Activated CD4-positive, alpha-beta memory T cell treated with anti-CD3 and anti-CD28 coated beads, Interleukin-2, amount 10 ng/mL, durations not matched to agents 7 days and 5 days (primary cell): ENCODE measurements at regions of chr3 and their contacts with region 1.

Region 1: DNA sequence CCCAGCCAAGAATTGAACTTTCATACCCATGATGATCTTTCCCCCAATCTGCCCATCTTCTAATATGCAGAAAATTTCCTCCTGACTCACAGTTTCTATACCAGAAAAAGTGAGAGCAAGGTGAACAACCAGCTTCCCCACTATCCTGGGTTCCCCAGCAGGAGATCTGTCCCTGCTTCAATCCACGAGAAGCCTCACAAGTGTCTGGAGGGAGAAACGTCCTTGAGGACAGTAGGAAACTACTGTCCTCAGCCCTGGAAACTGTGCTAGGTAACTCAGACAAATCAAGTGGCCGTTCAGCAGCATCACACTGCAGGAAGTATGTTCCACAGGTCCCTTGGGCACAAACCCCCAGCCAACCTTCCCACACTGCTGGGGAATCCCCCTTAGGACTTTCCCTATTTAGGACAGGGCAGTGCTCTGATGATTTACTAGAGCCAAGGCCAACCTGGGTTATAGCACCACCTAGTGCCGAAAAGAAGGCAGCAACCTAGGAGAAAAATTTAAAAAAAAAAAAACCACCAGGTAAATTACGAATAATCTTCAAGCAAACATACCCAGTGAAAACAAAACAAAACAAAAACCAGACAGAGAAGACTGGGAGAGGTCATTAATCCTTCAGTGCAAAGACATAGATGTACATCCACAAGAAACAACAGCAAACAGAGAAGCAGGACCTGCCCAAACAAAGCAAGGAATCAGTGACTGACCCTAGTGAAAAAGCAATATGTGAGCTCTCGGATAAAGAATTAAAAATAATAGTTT is 36.0 kb downstream of the MORC1 start:
- DNase-seq: peak; percentile 37
- H3K4me3 Mint-ChIP-seq: no peak overlapping the region
- H3K27ac Mint-ChIP-seq: no peak overlapping the region
- H3K4me1 Mint-ChIP-seq: no peaks in the 10 kb centered on the region
- H3K27me3 Mint-ChIP-seq: peaks cover 36% of the 10 kb centered on the region

Region 2: GRCh38 chr3:108914774-108915641 is 166.9 kb before region 1 on chr3:
- CTCF ChIA-PET with region 1: no interaction called
- POLR2A ChIA-PET with region 1: no interaction called
- DNase-seq: peak; percentile 72
- H3K4me3 Mint-ChIP-seq: peak overlapping the region; percentile 19
- H3K27ac Mint-ChIP-seq: peak overlapping the region; percentile 40
- H3K4me1 Mint-ChIP-seq: peaks cover 14% of the 10 kb centered on the region
- H3K27me3 Mint-ChIP-seq: peaks cover 17% of the 10 kb centered on the region

Region 3: GRCh38 chr3:109023656-109024254 is 58.2 kb before region 1 on chr3:
- CTCF ChIA-PET with region 1: interaction called, 94 read pairs
- POLR2A ChIA-PET with region 1: no interaction called
- DNase-seq: peak; percentile 40
- H3K4me3 Mint-ChIP-seq: no peak overlapping the region
- H3K27ac Mint-ChIP-seq: no peak overlapping the region
- H3K4me1 Mint-ChIP-seq: no peaks in the 10 kb centered on the region
- H3K27me3 Mint-ChIP-seq: peaks cover 5% of the 10 kb centered on the region

Region 4: DNA sequence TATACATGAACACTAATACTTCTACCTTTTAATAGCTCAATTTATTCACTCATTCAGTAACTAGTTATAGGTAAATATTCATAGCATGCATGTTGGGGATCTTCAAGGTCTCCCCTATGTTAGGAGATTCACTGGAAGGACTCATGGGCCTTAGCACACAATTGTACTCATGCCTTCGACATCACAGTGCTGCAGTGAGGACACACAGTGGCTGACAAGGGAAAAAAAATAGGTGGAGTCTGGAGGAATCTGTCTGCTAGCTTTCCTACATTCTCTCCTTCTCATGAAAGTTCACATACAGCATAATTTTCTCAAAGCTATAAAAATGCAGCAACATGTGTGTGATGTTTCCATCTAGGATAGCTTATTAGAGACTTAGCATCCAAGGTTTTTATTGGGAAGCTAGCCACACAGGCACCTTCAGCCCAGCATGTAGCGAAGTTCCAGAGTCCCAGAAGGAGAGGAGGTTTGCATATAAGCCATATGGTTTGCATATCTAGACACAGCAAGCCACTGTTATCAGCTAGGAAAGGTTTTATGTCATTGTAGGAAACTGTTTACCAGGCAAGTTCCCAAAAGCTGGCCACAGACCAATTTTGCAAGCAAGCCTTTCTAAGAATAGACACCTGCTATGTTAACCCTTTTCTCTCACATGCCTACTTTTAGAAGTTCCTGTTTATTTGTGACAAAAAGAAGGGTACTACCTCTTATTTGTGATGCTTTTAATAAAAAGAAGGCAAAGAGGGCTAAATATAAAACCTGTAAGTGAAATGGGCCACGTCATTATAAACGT is 10.4 kb before region 1 on chr3:
- CTCF ChIA-PET with region 1: interaction called, 14 read pairs
- POLR2A ChIA-PET with region 1: no interaction called
- DNase-seq: no peak
- H3K4me3 Mint-ChIP-seq: no peak overlapping the region
- H3K27ac Mint-ChIP-seq: no peak overlapping the region
- H3K4me1 Mint-ChIP-seq: peaks cover 22% of the 10 kb centered on the region
- H3K27me3 Mint-ChIP-seq: peaks cover 34% of the 10 kb centered on the region